Transverse colon (tissue), 4 donors: ENCODE measurements at regions of chr7 and their contacts with region 1.

Region 1: DNA sequence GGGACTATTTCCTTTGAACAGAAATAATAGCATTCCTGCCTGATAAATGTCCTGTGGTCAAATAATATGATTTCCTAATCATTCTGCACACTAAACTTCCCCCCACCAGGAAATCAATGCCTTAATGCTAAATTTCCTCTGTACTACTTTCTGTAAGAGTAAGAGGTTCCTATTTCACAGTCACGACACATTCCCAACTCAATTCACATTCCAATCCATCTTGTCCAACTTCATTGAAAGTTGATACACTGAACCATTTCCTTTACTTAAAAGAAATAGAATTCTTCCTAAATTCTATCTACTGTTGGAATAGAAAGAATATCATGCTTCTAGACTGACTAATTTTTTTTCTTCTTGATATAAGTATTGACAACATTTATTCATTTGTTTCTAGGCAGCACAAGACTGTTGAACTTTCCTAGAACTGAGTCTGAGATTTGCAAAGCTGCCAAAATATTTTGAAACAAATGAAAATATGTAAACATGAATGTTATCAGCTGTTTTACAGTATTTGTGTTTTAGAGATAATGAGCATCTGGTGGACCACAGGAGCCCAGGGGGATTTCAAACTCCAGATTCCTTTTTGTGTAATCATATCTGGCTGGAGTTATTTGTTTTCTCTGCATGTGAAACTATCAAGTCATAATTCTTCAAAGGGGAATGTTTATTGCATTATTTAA is 121.5 kb downstream of the TPST1 start:
- DNase-seq: no peak
- H3K4me3 ChIP-seq: no peak overlapping the region
- H3K27ac ChIP-seq: no peak overlapping the region
- H3K4me1 ChIP-seq: peaks cover 0 to 8% (median 0%) of the 10 kb centered on the region in 4 donors
- H3K27me3 ChIP-seq: no peaks in the 10 kb centered on the region
- CTCF ChIP-seq: no peak
- EP300 ChIP-seq: no peak
- POLR2A ChIP-seq: no peak

Region 2: DNA sequence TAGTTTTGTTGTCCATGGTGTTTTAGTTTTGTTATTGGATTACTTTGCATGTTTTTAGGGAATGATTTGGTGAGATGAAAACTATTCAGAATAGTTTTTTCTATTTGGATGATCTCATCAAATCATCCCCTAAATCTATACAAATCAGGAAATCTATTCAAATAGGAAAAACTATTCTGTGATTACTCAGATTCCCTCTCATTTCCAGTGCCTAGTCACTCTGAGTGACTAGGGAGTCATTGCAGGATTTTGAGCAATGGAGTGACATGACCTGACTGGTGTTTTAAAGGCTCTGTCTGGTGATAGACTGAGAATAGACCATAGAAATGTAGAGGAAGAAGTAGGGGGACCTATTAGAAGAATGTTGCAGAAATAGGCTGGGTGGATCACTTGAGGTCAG is 49.1 kb before region 1 on chr7:
- in situ Hi-C with region 1: no loop called
- intact Hi-C with region 1: loop called (anchors 10 kb)
- DNase-seq: no peak
- H3K4me3 ChIP-seq: no peak overlapping the region
- H3K27ac ChIP-seq: no peak overlapping the region
- H3K4me1 ChIP-seq: peaks cover under 1 to 9% (median 5%) of the 10 kb centered on the region in 4 donors
- H3K27me3 ChIP-seq: no peaks in the 10 kb centered on the region
- CTCF ChIP-seq: no peak
- EP300 ChIP-seq: no peak
- POLR2A ChIP-seq: no peak